IMR-90 (cell line): ENCODE measurements at regions of chr3 and their contacts with region 1.

Region 1: GRCh38 chr3:16090024-16090423 is 84.5 kb upstream of the GALNT15 start:
- DNase-seq: peak; percentile 99
- ATAC-seq: peak; percentile 89
- H3K4me3 ChIP-seq: no peak overlapping the region
- H3K27ac ChIP-seq: peak overlapping the region; percentile 88
- H3K4me1 ChIP-seq: peaks cover 41% of the 10 kb centered on the region
- H3K27me3 ChIP-seq: no peaks in the 10 kb centered on the region
- CTCF ChIP-seq: no peak
- POLR2A ChIP-seq: no peak
- RAD21 ChIP-seq: peak; percentile 27

Region 2: GRCh38 chr3:16060358-16060852 is 29.6 kb before region 1 on chr3:
- CTCF ChIA-PET with region 1: interaction called, 5 read pairs
- POLR2A ChIA-PET with region 1: interaction called, 5 read pairs
- dilution Hi-C with region 1: no loop called
- in situ Hi-C with region 1: no loop called
- intact Hi-C with region 1: loop called (anchors 2 kb)
- DNase-seq: peak; percentile 100
- ATAC-seq: peak; percentile 79
- H3K4me3 ChIP-seq: no peak overlapping the region
- H3K27ac ChIP-seq: peak overlapping the region; percentile 95
- H3K4me1 ChIP-seq: peaks cover 33% of the 10 kb centered on the region
- H3K27me3 ChIP-seq: no peaks in the 10 kb centered on the region
- CTCF ChIP-seq: peak; percentile 45
- POLR2A ChIP-seq: peak; percentile 43; the same call in 1 of the 2 replicates
- RAD21 ChIP-seq: peak; percentile 54

Region 3: GRCh38 chr3:16124636-16125035 is 34.6 kb after region 1 on chr3:
- CTCF ChIA-PET with region 1: interaction called, 3 read pairs
- POLR2A ChIA-PET with region 1: no interaction called
- dilution Hi-C with region 1: no loop called
- in situ Hi-C with region 1: no loop called
- intact Hi-C with region 1: loop called (anchors 1 kb)
- DNase-seq: peak; percentile 100
- ATAC-seq: peak; percentile 87
- H3K4me3 ChIP-seq: no peak overlapping the region
- H3K27ac ChIP-seq: peak overlapping the region; percentile 97
- H3K4me1 ChIP-seq: peaks cover 35% of the 10 kb centered on the region
- H3K27me3 ChIP-seq: no peaks in the 10 kb centered on the region
- CTCF ChIP-seq: no peak
- POLR2A ChIP-seq: no peak; the same call in 1 of the 2 replicates
- RAD21 ChIP-seq: peak; percentile 2